Right ventricle myocardium inferior (tissue), 1 donor: ENCODE measurements at regions of chr19 and their contacts with region 1.

Region 1: DNA sequence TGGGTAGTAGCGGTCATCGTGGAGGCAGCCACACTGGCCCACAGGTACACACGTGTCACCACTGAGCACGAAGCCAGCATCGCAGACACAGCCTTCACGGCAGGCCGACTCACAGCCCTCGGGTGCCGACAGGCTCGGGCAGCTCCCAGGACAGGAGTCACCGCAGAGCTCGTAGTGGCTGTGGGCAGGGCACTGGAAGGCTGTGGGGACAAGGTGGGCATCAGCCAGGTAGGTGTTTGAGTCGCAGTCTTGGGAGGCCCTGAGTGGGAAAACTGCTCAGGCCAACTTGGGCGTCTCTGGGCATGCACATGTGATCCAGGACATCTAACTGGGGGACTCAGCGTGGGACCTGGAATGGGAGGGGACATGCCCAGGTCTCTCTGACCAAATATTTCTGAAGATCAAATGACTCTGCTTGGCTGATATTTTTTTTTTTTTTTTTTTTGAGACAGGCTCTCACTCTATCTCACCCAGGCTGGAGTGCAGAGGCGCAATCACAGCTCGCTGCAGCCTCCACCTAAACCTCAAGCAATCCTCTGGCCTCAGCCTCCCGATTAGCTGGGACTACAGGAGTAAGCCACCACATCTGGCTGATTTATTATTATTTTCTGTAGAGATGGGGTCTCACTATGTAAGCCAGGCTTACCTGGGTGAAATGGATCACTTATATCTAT is 43.8 kb upstream of the FBL start:
- DNase-seq: no peak
- ATAC-seq: no peak

Region 2: GRCh38 chr19:39805104-39805503 is 84.9 kb before region 1 on chr19:
- intact Hi-C with region 1: no loop called
- DNase-seq: no peak
- ATAC-seq: no peak

Region 3: GRCh38 chr19:39878398-39878797 is 11.6 kb before region 1 on chr19:
- intact Hi-C with region 1: loop called (anchors 2 kb)
- DNase-seq: no peak
- ATAC-seq: no peak

Region 4: DNA sequence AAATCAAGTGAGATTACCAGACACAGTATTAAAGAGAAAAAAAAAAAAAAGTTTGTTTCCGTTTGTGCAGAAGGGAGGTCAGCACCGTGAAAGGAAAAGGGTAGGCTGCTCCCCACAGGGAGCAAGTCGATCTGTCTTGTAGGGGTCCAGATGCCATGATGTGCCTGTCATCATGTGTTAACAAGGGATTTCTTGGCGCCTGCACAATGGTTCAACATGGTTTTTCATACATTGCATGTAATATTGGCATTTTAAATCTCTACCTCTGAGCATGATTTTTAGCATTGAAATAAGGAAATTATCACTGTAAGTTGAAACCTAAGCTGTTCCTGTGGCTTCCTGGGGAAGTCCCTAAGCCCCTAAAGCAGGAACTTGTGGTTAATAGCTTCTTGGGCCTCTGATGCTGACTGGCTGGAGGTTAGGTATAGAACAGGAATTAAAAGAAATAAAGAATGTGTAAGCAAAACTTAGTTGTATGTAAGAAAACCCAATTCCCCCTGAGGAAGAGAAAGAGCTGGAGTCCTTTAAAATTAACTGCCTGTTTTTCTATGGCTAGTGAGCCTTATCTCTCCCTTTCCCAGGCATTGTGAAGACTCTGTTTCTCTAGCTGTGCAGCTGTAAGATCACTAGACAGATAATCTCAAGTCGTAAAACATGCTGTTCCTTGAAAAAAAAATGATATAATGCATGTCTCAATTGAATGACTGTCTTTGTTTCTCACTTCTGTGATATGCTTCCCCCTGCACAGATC is 51.8 kb after region 1 on chr19:
- intact Hi-C with region 1: no loop called
- DNase-seq: no peak
- ATAC-seq: peak; percentile 75